ENCODE measurements at regions of chr11 and their contacts with region 1.

Region 1: DNA sequence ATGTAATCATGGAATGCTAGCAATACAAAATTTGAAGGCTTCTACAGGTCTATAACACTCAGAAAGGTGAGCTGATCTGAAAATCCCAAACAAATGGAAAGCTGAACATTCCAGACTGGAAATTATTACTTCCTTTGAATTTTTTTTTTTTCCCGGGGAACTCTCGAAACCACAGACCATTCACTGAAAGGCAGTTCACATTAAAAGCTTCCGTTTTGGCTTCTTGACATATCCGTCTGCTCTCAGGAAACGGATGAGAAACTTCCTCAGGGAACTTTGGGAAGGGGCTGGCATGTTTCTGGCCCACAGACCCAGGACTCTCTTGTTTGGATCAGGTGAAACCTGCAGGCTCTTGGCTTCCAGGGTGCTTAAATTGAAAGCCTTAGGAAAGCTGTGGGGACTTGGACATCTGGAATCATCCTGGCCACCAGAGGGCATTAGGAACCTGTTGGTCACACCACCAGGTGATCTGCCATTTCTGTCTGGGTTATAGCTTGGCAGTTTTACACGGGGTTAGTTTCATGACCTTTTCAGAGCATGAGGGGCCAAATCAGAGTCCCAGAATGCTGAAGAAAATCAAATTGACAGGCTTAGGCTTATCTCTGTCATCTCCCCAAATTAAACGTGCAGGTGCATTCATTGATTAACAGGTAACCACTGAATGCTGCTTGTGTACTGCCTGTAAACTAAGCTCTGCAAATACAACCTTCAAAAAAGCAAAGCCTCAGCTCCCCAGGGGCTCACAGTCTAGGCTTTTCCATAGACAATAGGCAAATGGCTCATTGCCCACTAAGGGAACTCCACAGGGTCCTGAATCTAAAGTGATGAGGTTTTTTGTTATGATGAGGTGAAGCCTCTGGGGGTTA is 22.7 kb upstream of the GRAMD1B start:
- DNase-seq: peak; percentile 81
- H3K4me3 Mint-ChIP-seq: no peak overlapping the region
- H3K27ac Mint-ChIP-seq: no peak overlapping the region
- H3K4me1 Mint-ChIP-seq: no peaks in the 10 kb centered on the region
- H3K27me3 Mint-ChIP-seq: peaks cover 50% of the 10 kb centered on the region
- CTCF ChIP-seq: peak; percentile 76

Region 2: GRCh38 chr11:123110356-123110755 is 297.0 kb before region 1 on chr11:
- CTCF ChIA-PET with region 1: interaction called, 10 read pairs
- POLR2A ChIA-PET with region 1: no interaction called
- intact Hi-C with region 1: no loop called
- DNase-seq: no peak
- H3K4me3 Mint-ChIP-seq: no peak overlapping the region
- H3K27ac Mint-ChIP-seq: no peak overlapping the region
- H3K4me1 Mint-ChIP-seq: peaks cover 5% of the 10 kb centered on the region
- H3K27me3 Mint-ChIP-seq: no peaks in the 10 kb centered on the region
- CTCF ChIP-seq: no peak

Region 3: DNA sequence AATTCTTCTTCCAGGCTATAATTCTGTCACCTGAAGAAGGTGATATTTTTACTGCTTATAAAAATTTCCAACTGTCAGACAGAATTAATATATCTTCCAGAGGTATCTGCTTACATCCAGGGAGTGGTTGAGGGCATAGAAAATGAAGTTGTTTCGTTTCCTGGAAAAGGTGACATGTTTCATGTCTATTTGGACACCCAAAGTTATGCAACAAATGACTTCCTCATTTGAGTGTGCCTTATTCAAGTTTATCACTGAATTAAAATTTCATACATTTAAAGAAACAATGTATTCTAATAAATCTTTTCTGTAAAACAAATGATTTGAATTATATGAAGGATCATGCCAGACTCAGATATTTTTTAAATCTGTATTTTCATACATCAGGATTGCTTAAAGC is 14.2 kb after region 1 on chr11:
- CTCF ChIA-PET with region 1: interaction called, 27 read pairs
- POLR2A ChIA-PET with region 1: interaction called, 3 read pairs
- intact Hi-C with region 1: no loop called
- DNase-seq: no peak
- H3K4me3 Mint-ChIP-seq: no peak overlapping the region
- H3K27ac Mint-ChIP-seq: no peak overlapping the region
- H3K4me1 Mint-ChIP-seq: no peaks in the 10 kb centered on the region
- H3K27me3 Mint-ChIP-seq: peaks cover 85% of the 10 kb centered on the region
- CTCF ChIP-seq: no peak

Region 4: DNA sequence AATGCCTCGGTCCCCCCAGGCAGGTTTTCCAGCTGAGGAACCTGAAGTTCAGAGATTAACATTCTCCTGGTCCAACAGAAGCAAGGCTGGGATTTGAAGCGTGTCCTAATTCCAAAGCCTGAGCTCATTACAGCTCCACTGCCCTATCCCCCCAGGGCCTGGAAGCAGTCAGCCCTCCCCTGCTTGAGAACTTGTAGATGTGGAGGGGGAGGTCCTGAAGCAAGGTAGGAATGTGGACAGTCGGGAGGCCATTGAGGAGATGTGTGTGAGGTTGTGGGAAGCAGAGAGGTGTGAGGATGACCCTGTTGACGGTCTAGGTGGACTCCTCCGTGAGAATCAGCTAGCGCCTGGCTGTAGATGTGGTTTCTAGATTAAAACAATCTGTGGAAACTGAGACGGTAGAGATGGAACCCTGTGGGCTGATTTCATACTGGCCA is 30.8 kb after region 1 on chr11:
- CTCF ChIA-PET with region 1: interaction called, 25 read pairs
- POLR2A ChIA-PET with region 1: no interaction called
- intact Hi-C with region 1: no loop called
- DNase-seq: no peak
- H3K4me3 Mint-ChIP-seq: no peak overlapping the region
- H3K27ac Mint-ChIP-seq: no peak overlapping the region
- H3K4me1 Mint-ChIP-seq: no peaks in the 10 kb centered on the region
- H3K27me3 Mint-ChIP-seq: no peaks in the 10 kb centered on the region
- CTCF ChIP-seq: no peak

Region 5: DNA sequence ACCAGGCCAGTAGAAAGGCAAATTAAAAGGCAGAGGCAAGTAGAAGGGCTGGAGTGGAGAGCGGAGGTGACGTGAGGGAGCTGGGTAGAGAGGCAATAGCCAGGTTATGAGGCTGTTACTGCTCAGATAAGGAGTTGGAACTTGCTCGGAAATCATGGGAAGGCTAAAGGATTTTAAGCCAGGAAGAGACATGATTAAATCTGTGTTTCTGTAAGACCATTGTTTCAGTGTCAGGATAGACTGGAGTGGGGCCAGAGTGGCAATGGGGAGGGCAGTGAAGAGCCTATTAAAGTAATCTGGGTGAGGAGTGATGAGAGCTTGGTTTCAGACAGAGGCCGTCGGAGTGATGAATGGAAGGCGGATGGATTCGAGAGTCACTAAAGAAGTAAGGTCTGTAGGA is 61.7 kb after region 1 on chr11:
- CTCF ChIA-PET with region 1: interaction called, 376 read pairs
- POLR2A ChIA-PET with region 1: interaction called, 5 read pairs
- intact Hi-C with region 1: loop called (anchors 1 kb)
- DNase-seq: no peak
- H3K4me3 Mint-ChIP-seq: no peak overlapping the region
- H3K27ac Mint-ChIP-seq: no peak overlapping the region
- H3K4me1 Mint-ChIP-seq: peaks cover 9% of the 10 kb centered on the region
- H3K27me3 Mint-ChIP-seq: no peaks in the 10 kb centered on the region
- CTCF ChIP-seq: no peak

Region 6: DNA sequence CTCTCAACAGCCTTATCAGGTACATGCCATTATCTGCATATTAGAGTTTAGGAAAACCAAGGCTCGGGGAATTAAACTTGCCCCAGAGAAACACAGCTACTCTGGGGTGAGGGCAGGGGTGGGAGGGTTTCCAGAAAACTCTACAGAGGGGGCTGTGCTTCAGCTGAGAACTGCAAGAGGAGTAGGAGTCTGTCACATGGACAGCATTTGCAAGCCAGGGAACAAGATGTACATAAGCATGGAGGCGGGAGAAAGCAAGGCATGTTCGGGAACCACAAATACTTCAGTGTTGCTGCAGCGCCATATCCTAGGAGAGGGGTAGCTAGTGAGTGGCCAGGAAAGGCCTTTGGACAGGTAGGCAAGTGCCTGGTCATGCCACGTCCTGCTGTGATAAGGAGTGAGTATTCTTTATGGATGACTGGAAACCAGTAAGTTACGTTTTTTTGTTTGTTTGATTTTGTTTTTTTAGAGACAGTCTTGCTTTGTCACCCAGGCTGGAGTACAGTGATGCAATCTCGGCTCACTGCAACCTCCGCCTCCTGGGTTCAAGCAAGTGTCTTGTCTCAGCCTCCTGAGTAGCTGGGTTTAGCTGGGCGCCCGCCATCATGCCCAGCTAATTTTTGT is 79.9 kb after region 1 on chr11:
- CTCF ChIA-PET with region 1: interaction called, 36 read pairs
- POLR2A ChIA-PET with region 1: no interaction called
- intact Hi-C with region 1: no loop called
- DNase-seq: no peak
- H3K4me3 Mint-ChIP-seq: no peak overlapping the region
- H3K27ac Mint-ChIP-seq: no peak overlapping the region
- H3K4me1 Mint-ChIP-seq: no peaks in the 10 kb centered on the region
- H3K27me3 Mint-ChIP-seq: no peaks in the 10 kb centered on the region
- CTCF ChIP-seq: no peak

Region 7: GRCh38 chr11:123580557-123581275 is 173.4 kb after region 1 on chr11:
- CTCF ChIA-PET with region 1: interaction called, 10 read pairs
- POLR2A ChIA-PET with region 1: no interaction called
- intact Hi-C with region 1: no loop called
- DNase-seq: peak; percentile 68
- H3K4me3 Mint-ChIP-seq: no peak overlapping the region
- H3K27ac Mint-ChIP-seq: no peak overlapping the region
- H3K4me1 Mint-ChIP-seq: peaks cover 9% of the 10 kb centered on the region
- H3K27me3 Mint-ChIP-seq: peaks cover 49% of the 10 kb centered on the region
- CTCF ChIP-seq: peak; percentile 95

Measured in MCF 10A (cell line).